ENCODE measurements at regions of chr10 and their contacts with region 1.

Region 1: DNA sequence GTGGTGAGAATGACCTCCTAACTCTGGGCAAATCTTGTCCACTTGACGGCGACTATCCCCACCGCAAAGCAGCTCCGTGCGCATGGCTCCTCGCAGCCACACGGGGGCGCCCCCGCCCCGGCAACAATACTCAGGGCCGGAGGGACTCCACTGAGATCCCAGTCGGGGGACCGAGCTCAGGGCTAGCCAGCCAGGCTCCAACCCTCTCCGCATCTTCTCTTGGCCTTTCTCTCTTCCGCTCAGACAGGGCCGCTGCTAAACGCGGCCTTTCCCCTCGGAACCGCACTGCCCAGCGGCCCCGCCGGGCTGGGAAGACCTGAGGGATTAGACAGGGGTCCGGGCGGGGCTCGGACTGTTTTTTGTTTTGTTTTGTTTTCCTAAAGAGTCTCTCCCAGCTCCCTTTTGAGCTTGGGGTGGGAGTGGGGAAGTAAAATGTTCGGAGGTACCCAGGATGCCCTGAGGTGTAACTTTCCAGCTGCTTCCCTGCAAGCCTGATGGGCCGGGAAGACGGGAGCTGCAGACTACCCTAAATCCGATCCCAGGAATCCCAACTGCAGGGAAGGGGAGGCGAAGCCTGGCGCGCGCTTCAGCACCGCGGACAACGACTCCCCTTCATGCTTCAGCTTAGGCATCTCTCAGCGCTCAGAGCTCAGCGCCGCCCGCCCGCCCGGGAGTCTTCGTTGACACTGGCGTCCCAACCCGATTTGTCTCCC is 2.7 kb downstream of the KCNIP2 start:
- DNase-seq: peak; percentile 58 to 82 (median 64)
- H3K4me3 ChIP-seq: peak overlapping the region; percentile 45
- H3K4me3 Mint-ChIP-seq: peak overlapping the region; percentile 82 to 95 (median 88)
- H3K27ac ChIP-seq: no peak overlapping the region
- H3K27ac Mint-ChIP-seq: peak overlapping the region in 6 of 8 donors; percentile 65 to 95 (median 82)
- H3K4me1 ChIP-seq: peaks cover 48% of the 10 kb centered on the region
- H3K4me1 Mint-ChIP-seq: peaks cover 41 to 62% (median 52%) of the 10 kb centered on the region in 3 donors
- H3K27me3 ChIP-seq: no peaks in the 10 kb centered on the region
- H3K27me3 Mint-ChIP-seq: peaks cover 0 to 7% of the 10 kb centered on the region in 2 donors

Region 2: GRCh38 chr10:101441541-101442455 is 399.1 kb before region 1 on chr10:
- CTCF ChIA-PET with region 1: no interaction called
- POLR2A ChIA-PET with region 1: no interaction called
- DNase-seq: peak in 2 of 5 donors; percentile 6 to 13
- H3K4me3 ChIP-seq: no peak overlapping the region
- H3K4me3 Mint-ChIP-seq: no peak overlapping the region
- H3K27ac ChIP-seq: no peak overlapping the region
- H3K27ac Mint-ChIP-seq: peak overlapping the region in 1 of 8 donors; percentile 30
- H3K4me1 ChIP-seq: no peaks in the 10 kb centered on the region
- H3K4me1 Mint-ChIP-seq: peaks cover 0 to 10% (median 9%) of the 10 kb centered on the region in 3 donors
- H3K27me3 ChIP-seq: no peaks in the 10 kb centered on the region
- H3K27me3 Mint-ChIP-seq: no peaks in the 10 kb centered on the region

Region 3: GRCh38 chr10:101782811-101783735 is 57.8 kb before region 1 on chr10 and contains the start of gene NPM3:
- CTCF ChIA-PET with region 1: interaction called, 18 read pairs
- POLR2A ChIA-PET with region 1: interaction called, 5 read pairs
- DNase-seq: peak; percentile 66 to 85 (median 74)
- H3K4me3 ChIP-seq: peak within 1 kb of the TSS; percentile 67
- H3K4me3 Mint-ChIP-seq: peak within 1 kb of the TSS; percentile 91 to 100 (median 99)
- H3K27ac ChIP-seq: peak within 1 kb of the TSS; percentile 52
- H3K27ac Mint-ChIP-seq: peak within 1 kb of the TSS; percentile 77 to 98 (median 96)
- H3K4me1 ChIP-seq: peaks cover 54% of the 10 kb centered on the region
- H3K4me1 Mint-ChIP-seq: peaks cover 53 to 82% (median 69%) of the 10 kb centered on the region in 3 donors
- H3K27me3 ChIP-seq: peaks cover 5% of the 10 kb centered on the region
- H3K27me3 Mint-ChIP-seq: peaks cover 6 to 11% of the 10 kb centered on the region in 2 donors
- total RNA-seq, gene NPM3: 209 to 217 TPM

Region 4: DNA sequence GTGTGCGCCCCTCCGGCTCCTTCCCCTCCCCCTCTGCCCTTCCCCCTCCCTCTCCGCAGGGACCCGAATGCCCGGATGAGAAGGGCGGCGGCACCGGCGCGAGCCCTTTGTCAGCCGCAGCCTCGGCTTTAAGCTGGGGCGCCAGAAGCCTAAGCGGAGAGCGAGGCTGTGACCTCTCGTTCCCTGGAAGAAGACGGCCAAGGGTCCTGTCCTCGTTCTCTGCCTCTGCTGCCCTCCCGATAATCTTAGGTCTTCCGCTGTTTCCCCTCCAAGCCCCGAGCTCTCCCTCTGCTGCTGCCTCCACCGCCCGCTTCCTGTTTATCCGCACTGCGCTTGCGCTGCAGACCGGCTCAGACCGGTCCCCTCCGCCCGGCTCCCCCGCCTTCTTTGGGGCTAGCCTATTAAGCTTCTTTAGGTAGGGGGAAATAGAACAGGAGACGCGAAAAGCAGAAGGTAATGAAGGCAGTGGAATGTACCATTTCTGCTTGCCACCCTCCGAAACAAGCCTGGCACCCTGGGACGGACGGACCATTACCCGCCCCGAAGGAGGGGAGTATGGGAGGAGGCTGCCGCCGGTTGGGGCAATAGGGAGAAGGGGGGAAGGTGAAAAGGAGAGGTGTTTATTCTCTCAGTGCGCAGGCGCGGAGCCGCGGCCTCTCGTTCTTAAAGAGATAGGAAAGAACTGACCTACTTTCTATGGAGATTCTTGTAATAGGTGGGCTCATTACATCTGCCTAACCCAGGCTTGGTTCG is 22.6 kb before region 1 on chr10 and contains the start of gene OGA:
- CTCF ChIA-PET with region 1: interaction called, 77 read pairs
- POLR2A ChIA-PET with region 1: interaction called, 24 read pairs
- DNase-seq: peak; percentile 96 to 100 (median 99)
- H3K4me3 ChIP-seq: peak within 1 kb of the TSS; percentile 79
- H3K4me3 Mint-ChIP-seq: peak within 1 kb of the TSS; percentile 92 to 100 (median 97)
- H3K27ac ChIP-seq: peak within 1 kb of the TSS; percentile 79
- H3K27ac Mint-ChIP-seq: peak within 1 kb of the TSS; percentile 90 to 99 (median 97)
- H3K4me1 ChIP-seq: peaks cover 30% of the 10 kb centered on the region
- H3K4me1 Mint-ChIP-seq: peaks cover 42 to 49% (median 45%) of the 10 kb centered on the region in 3 donors
- H3K27me3 ChIP-seq: no peaks in the 10 kb centered on the region
- H3K27me3 Mint-ChIP-seq: peaks cover 0 to 4% of the 10 kb centered on the region in 2 donors
- total RNA-seq, gene OGA: 95.8 to 109 TPM

Region 5: DNA sequence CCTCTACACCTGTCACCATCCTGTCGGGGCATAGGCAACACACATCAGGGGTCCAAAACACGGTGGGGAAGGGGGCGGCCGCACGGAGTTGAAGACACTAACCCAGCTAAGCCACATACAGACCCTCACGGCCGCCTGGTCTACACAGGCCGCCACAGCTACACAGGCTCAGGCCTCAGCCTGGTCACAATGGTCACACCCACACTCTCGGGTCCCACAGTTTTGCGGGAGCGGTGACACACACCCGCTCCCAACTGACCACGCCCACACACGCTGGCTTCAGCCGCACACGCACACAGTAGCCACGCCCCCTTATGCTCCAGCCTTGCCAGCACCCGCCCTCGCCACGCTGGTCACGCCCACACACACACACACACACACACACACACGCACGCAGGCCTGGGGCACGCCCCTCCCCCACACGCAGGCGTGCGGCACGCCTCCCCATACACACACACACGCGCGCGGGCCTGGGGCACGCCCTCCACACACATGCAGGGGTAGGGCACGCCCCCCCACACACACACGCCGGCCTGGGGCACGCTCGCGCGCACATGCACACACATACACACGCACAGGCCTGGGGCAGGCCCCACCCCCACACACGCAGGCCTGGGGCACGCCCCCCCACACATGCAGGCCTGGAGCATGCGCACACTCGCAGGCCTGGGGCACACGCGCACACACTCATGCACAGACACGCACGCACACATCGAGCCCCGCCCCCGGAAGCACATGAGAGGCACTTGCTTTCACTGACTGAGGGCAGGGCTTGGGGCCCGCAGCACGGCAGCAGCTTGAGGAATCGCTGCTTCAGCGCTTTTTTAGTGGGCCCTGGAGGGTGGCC is 10.4 kb before region 1 on chr10:
- CTCF ChIA-PET with region 1: interaction called, 17 read pairs
- POLR2A ChIA-PET with region 1: interaction called, 7 read pairs
- DNase-seq: peak; percentile 92 to 96 (median 93)
- H3K4me3 ChIP-seq: peak overlapping the region; percentile 56
- H3K4me3 Mint-ChIP-seq: peak overlapping the region; percentile 88 to 94 (median 91)
- H3K27ac ChIP-seq: peak overlapping the region; percentile 52
- H3K27ac Mint-ChIP-seq: peak overlapping the region; percentile 95 to 99 (median 97)
- H3K4me1 ChIP-seq: peaks cover 55% of the 10 kb centered on the region
- H3K4me1 Mint-ChIP-seq: peaks cover 42 to 61% (median 49%) of the 10 kb centered on the region in 3 donors
- H3K27me3 ChIP-seq: no peaks in the 10 kb centered on the region
- H3K27me3 Mint-ChIP-seq: peaks cover 0 to 10% of the 10 kb centered on the region in 2 donors

Region 6: DNA sequence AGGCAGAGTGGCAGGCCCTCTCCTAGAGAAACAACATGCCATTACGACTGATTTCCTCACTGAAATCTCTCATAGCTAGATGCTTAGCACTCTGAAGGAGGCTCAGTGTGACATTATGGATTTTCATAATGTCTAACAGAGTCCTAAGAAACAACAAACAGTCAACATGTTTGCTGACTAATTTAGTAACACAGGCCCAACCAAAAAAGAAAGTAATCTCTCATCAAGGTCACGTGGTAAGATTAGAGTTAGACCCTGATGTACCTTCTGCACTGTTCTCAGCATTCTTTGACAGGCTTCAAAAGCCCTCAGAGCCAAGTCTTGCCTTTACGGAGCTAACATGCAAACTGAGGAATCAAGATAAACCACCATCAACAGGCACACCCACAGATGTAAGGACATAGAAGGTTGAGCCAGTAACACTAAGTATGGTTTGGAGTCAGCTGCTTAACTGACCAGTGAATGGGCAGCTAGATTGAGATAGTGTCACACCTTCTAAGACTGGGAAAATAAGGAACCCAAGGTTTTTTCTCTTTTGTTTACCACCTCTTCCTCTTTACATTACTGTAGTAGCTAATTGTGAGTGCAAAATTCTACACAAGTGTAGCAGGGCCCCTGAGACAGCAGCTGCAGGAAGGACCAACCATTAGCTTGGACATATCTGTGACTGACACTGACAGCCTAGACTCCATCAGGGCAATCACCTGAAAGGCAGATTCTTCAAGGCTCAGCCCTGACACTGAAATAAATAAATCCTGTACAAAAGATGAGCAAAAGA is 18.0 kb after region 1 on chr10:
- CTCF ChIA-PET with region 1: interaction called, 13 read pairs
- POLR2A ChIA-PET with region 1: no interaction called
- DNase-seq: no peak
- H3K4me3 ChIP-seq: no peak overlapping the region
- H3K4me3 Mint-ChIP-seq: peak overlapping the region in 5 of 7 donors; percentile 5 to 75 (median 53)
- H3K27ac ChIP-seq: no peak overlapping the region
- H3K27ac Mint-ChIP-seq: peak overlapping the region; percentile 4 to 85 (median 69)
- H3K4me1 ChIP-seq: no peaks in the 10 kb centered on the region
- H3K4me1 Mint-ChIP-seq: peaks cover 9 to 20% (median 20%) of the 10 kb centered on the region in 3 donors
- H3K27me3 ChIP-seq: no peaks in the 10 kb centered on the region
- H3K27me3 Mint-ChIP-seq: no peaks in the 10 kb centered on the region

Region 7: DNA sequence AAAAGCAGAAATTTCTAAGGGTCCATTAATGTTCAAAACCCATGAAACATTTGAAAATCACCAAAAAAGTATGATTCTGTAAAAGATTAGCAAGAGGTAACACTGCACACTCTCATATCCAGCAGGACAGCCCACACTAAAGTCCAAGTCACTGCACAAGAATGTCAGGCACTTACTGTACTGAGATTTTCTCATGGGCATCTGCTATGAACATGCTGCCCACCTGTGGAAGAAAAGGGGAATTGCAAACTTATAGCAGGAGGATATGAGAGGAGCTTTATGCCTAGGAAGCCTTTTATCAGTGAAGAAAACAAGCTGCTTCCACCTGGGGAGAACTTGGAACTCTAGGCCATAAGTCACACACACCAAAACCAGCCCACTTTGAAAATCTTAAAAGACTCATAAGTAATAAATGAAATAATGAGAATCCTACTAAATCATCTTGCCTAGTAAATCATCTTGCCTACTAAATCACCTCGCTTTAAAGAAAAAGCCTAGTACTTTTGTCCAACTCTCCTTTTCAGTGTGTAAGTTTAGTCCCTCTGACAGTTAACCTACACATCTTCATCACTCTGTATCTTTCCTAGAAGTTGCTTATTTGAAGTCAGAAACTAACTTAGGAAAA is 169.0 kb after region 1 on chr10:
- CTCF ChIA-PET with region 1: interaction called, 38 read pairs
- POLR2A ChIA-PET with region 1: interaction called, 4 read pairs
- DNase-seq: peak; percentile 1 to 50 (median 41)
- H3K4me3 ChIP-seq: no peak overlapping the region
- H3K4me3 Mint-ChIP-seq: no peak overlapping the region
- H3K27ac ChIP-seq: no peak overlapping the region
- H3K27ac Mint-ChIP-seq: peak overlapping the region in 2 of 8 donors; percentile 66 to 67
- H3K4me1 ChIP-seq: no peaks in the 10 kb centered on the region
- H3K4me1 Mint-ChIP-seq: peaks cover 0 to 3% (median 0%) of the 10 kb centered on the region in 3 donors
- H3K27me3 ChIP-seq: no peaks in the 10 kb centered on the region
- H3K27me3 Mint-ChIP-seq: no peaks in the 10 kb centered on the region

Measured in CD8-positive, alpha-beta memory T cell (primary cell).